HEK293 (cell line): ENCODE measurements at regions of chr20 and their contacts with region 1.

Region 1: DNA sequence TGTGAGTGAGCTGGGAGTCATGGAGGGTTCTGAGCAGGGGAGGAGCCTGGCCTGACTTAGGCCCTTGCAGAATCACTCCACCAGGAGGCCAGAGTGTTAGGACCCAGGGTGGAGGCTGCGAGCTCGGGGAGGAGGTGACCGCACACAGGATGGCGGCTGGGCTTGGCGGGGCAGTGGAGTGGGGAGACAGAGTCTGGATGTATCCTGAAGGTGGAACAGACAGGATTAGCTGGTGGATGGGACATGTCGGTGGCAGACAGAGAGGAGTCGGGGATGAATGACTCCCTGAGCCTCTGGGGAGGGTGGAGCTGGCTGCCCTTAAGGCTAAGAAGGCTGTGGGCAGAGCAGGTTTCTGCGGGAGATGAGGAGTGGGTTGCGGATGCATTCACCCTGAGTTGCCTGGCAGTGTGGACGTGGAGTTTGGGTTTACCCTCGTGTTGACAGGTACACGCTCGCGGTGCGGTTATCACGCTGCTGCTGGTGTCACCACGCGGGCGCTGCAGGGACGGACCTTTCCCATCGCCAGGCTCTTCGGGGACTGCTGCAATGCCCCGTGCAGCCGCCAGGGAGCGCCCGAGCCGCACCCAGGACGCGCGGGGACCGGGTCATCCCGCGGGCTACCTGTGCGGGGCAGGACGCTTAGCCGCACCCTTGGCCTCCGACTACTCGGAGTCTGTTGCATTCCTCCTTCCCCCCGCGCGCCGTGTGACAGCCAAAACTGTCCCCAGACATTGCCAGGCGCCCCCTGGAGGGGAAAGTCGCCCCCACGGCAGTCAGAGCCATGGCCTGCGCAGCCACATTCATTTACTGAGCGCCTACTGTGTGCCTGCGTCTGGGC is 43.0 kb upstream of the PTGIS start:
- H3K4me3 ChIP-seq: peak overlapping the region; percentile 21
- H3K27ac ChIP-seq: no peak overlapping the region
- H3K4me1 ChIP-seq: no peaks in the 10 kb centered on the region
- CTCF ChIP-seq: peak; percentile 100

Region 2: DNA sequence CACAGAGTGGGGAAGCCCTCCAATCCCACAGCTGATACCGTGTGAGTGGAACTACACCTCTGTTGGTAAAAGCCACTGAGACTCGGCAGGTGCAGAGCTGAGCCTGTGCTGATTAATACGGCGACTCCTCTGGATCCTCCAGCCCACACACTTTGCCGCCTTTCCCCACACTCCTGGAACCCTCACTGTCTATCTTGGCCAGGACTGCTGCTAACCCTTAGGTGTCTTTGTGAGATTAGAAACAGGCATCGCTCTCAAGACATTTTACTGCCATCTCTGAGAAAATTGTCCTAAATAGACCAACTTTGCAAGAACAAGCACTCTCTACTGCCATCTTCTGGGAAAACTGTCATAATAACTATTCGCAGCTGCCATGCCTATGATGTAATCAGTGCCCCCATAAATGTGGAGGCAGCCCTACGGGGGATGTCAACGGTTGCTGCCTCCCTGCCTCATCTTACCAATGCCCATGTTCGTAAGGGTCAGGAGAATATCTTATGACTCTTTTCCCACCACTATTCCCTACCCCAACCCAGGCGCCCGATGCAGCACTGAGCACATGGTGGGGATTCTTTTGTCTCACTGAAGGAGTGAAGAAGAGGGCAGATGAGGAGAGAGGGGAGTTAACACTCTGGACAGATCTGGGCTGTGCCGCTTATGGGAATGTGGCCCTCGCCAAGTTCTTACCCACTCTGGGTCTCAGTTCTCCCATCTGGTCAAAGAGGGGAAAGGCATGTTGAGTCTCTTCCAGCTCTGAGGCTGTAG is 102.3 kb before region 1 on chr20:
- CTCF ChIA-PET with region 1: interaction called, 11 read pairs
- POLR2A ChIA-PET with region 1: no interaction called
- H3K4me3 ChIP-seq: no peak overlapping the region
- H3K27ac ChIP-seq: no peak overlapping the region
- H3K4me1 ChIP-seq: no peaks in the 10 kb centered on the region
- CTCF ChIP-seq: peak; percentile 57

Region 3: GRCh38 chr20:49541733-49542513 is 69.0 kb before region 1 on chr20:
- CTCF ChIA-PET with region 1: interaction called, 297 read pairs
- POLR2A ChIA-PET with region 1: interaction called, 4 read pairs
- H3K4me3 ChIP-seq: no peak overlapping the region
- H3K27ac ChIP-seq: no peak overlapping the region
- H3K4me1 ChIP-seq: no peaks in the 10 kb centered on the region
- CTCF ChIP-seq: peak; percentile 88

Region 4: DNA sequence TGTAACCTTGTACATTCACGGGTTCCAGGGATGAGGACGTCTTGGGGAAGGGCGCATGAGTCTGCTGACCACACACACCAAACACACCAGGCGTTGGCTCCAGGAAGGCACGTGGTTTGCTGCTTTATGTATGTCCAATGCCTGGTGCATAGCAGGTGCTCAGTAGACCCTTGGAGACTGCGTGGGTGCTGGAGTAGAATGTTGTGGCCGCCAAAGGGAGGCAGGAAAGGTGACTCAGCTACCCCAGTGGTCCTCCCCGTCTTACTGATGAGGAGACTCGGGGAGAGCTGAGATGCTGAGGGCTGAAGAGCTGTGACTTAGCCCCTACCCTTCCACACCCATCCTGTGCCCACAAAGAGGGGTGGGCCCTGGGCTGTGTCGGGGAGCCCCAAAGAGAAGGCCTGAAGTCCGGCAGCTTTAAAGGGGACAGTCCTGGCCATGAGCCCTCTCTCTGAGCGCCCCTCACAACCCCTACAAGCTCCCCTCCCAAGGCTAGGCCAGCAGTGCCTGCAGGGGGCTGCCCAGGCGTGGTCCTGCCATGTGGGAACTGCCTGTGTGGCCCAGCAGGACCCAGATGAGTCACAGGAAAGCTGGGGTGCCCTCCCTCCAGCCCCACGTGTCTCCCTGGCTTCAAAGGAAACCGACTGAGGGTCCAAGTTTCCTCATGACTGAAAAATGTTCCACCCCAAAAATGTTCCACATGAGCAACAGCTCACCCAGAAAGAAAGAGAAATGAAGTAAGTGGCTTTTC is 14.9 kb before region 1 on chr20:
- CTCF ChIA-PET with region 1: interaction called, 14 read pairs
- POLR2A ChIA-PET with region 1: no interaction called
- H3K4me3 ChIP-seq: no peak overlapping the region
- H3K27ac ChIP-seq: no peak overlapping the region
- H3K4me1 ChIP-seq: no peaks in the 10 kb centered on the region
- CTCF ChIP-seq: no peak

Region 5: DNA sequence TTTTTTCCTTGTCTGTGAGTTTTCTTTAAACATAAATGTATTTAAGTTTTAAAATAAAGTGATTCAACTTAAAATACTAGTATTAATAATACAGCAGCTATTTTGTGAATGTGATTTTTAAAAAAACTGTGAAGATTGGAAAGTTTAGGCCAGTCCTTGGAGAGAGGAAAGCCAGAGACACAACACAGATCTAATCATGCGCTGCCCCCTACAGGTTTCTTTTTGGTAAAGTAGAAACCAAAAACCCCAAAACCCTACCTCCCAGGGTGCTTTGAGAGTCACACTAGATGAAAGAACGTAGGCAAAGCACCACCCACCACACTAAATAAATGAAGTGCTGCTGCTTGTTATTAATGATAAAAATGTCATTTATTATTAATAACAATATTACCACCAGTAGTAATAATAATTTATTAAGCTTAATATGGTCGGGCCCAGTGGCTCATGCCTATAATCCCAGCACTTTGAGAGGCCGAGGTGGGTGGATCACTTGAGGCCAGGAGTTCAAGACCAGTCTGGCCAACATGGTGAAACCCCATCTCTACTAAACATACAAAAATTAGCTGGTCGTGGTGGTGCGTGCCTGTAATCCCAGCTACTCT is 235.4 kb after region 1 on chr20:
- CTCF ChIA-PET with region 1: interaction called, 43 read pairs
- POLR2A ChIA-PET with region 1: no interaction called
- H3K4me3 ChIP-seq: no peak overlapping the region
- H3K27ac ChIP-seq: no peak overlapping the region
- H3K4me1 ChIP-seq: no peaks in the 10 kb centered on the region
- CTCF ChIP-seq: no peak